ENCODE measurements at regions of chrX and their contacts with region 1.

Region 1: DNA sequence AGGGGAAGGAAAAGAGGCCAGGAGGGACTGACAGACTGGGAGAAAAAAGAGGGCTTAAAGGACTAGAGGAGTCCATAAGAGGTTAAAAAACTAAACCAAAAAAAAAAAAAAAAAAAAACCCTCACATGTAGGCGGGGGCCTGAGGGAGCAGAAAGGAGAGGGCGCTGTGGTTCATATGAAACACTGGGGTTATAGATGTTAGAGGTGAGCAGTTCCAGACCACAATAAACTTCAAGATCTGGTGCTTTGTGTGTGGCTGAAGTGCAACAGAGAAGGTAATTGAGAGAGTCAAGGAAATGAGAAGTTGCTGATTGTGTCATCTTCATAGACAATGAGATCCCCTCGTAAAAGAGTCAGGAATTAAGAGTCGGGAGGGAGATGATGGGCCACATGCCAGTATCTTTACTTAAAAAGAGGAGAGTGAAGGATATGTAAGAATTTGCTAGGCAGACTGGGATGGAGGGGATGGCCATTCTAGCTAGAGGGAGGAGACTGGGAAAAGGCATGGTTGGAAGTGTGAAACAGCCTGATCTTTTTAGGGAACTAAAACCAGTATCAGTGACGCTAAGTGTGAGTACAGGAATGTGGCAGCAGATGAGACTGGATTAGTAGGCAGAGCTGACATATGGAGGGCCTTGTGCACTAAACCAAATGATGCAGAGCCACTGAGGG is 18.4 kb upstream of the OGT start:
- DNase-seq: peak in 9 of 14 experiments; percentile 6 to 76 (median 38)
- ATAC-seq: peak; percentile 97
- H3K4me3 ChIP-seq: no peak overlapping the region
- H3K4me3 Mint-ChIP-seq: no peak overlapping the region
- H3K27ac ChIP-seq: no peak overlapping the region
- H3K27ac Mint-ChIP-seq: peak overlapping the region; percentile 16
- H3K4me1 ChIP-seq: peaks cover 2% of the 10 kb centered on the region
- H3K4me1 Mint-ChIP-seq: peaks cover 8% of the 10 kb centered on the region
- H3K27me3 ChIP-seq: no peaks in the 10 kb centered on the region
- H3K27me3 Mint-ChIP-seq: no peaks in the 10 kb centered on the region
- CTCF ChIP-seq: no peak

Region 2: DNA sequence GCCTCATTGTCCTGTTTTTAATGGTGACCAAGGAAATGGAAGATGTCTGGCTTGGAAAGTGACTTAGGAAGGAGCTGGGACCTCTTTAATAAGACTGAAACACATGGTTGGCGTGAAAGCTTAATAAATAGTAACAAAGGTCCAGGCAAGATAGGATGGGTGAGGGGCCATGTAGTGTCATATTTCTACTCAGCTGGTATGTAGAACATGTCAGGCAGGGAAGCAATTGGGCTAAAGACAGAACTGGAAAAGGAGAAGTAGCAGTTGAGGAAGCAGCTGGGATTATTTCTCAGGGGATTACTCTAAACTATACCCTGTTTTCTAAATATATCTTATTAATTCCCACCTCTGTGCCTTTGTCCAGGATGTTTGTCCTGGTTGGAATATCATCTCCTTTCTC is 194.4 kb before region 1 on chrX:
- CTCF ChIA-PET with region 1: no interaction called
- POLR2A ChIA-PET with region 1: no interaction called
- intact Hi-C with region 1: no loop called
- DNase-seq: no peak
- ATAC-seq: no peak
- H3K4me3 ChIP-seq: no peak overlapping the region
- H3K4me3 Mint-ChIP-seq: no peak overlapping the region
- H3K27ac ChIP-seq: no peak overlapping the region
- H3K27ac Mint-ChIP-seq: no peak overlapping the region
- H3K4me1 ChIP-seq: no peaks in the 10 kb centered on the region
- H3K4me1 Mint-ChIP-seq: no peaks in the 10 kb centered on the region
- H3K27me3 ChIP-seq: no peaks in the 10 kb centered on the region
- H3K27me3 Mint-ChIP-seq: no peaks in the 10 kb centered on the region
- CTCF ChIP-seq: no peak

Region 3: GRCh38 chrX:71550578-71550977 is 36.1 kb after region 1 on chrX:
- CTCF ChIA-PET with region 1: interaction called, 3 read pairs
- POLR2A ChIA-PET with region 1: no interaction called
- intact Hi-C with region 1: loop called in 1 of 2 experiments (anchors 2 kb)
- DNase-seq: no peak
- ATAC-seq: no peak
- H3K4me3 ChIP-seq: no peak overlapping the region
- H3K4me3 Mint-ChIP-seq: no peak overlapping the region
- H3K27ac ChIP-seq: no peak overlapping the region
- H3K27ac Mint-ChIP-seq: no peak overlapping the region
- H3K4me1 ChIP-seq: peaks cover 13% of the 10 kb centered on the region
- H3K4me1 Mint-ChIP-seq: peaks cover 14% of the 10 kb centered on the region
- H3K27me3 ChIP-seq: no peaks in the 10 kb centered on the region
- H3K27me3 Mint-ChIP-seq: no peaks in the 10 kb centered on the region
- CTCF ChIP-seq: no peak

Measured in CD4-positive, alpha-beta T cell (primary cell).